HepG2 (cell line): ENCODE measurements at regions of chr13 and their contacts with region 1.

Region 1: GRCh38 chr13:45310341-45311125 is 30.4 kb downstream of the TPT1 start:
- DNase-seq: no peak
- ATAC-seq: peak; percentile 20
- H3K4me3 ChIP-seq: peak overlapping the region in 1 of 3 experiments; percentile 58; a peak in 2 of 6 replicates
- H3K27ac ChIP-seq: no peak overlapping the region
- H3K4me1 ChIP-seq: peaks cover 15% of the 10 kb centered on the region
- H3K27me3 ChIP-seq: no peaks in the 10 kb centered on the region; a peak in 2 of 5 replicates
- CTCF ChIP-seq: no peak
- EP300 ChIP-seq: no peak
- POLR2A ChIP-seq: no peak
- RAD21 ChIP-seq: no peak

Region 2: DNA sequence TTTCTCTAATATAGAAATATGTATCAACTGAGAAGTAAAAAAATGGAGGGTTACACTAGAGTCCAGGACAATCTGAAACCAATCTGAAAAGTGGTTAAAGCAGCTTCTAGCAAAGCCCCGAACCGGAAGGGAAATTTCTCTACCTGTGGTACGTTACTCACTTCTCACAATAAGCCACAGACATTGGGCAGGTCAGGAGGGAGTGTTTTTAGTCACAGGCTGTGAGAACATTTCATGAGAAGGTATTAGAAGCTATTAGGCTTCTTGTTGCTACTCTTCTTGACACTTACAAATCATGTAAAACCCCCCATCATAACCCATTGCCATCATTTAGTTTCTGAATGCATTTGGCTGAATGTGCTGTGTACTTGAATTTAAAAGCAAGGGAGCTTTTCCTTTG is 442.1 kb before region 1 on chr13:
- CTCF ChIA-PET with region 1: no interaction called
- POLR2A ChIA-PET with region 1: no interaction called
- in situ Hi-C with region 1: no loop called
- intact Hi-C with region 1: no loop called
- DNase-seq: no peak
- ATAC-seq: no peak
- H3K4me3 ChIP-seq: no peak overlapping the region
- H3K27ac ChIP-seq: no peak overlapping the region
- H3K4me1 ChIP-seq: 0 out of 2 replicates have a peak, but pooled peaks cover 7% of the 10 kb centered on the region
- H3K27me3 ChIP-seq: no peaks in the 10 kb centered on the region; a peak in 1 of 5 replicates
- CTCF ChIP-seq: no peak
- EP300 ChIP-seq: no peak
- POLR2A ChIP-seq: no peak
- RAD21 ChIP-seq: no peak

Region 3: GRCh38 chr13:44969551-44970484 is 340.7 kb before region 1 on chr13:
- CTCF ChIA-PET with region 1: interaction called, 4 read pairs
- POLR2A ChIA-PET with region 1: no interaction called
- in situ Hi-C with region 1: no loop called
- intact Hi-C with region 1: loop called (anchors 1 kb)
- DNase-seq: peak; percentile 49
- ATAC-seq: peak; percentile 69
- H3K4me3 ChIP-seq: no peak overlapping the region
- H3K27ac ChIP-seq: no peak overlapping the region
- H3K4me1 ChIP-seq: peaks cover 16% of the 10 kb centered on the region
- H3K27me3 ChIP-seq: no peaks in the 10 kb centered on the region
- CTCF ChIP-seq: peak; percentile 72
- EP300 ChIP-seq: no peak
- POLR2A ChIP-seq: no peak
- RAD21 ChIP-seq: 0 out of 2 replicates have a peak, but pooled peaks have one; percentile 26

Region 4: DNA sequence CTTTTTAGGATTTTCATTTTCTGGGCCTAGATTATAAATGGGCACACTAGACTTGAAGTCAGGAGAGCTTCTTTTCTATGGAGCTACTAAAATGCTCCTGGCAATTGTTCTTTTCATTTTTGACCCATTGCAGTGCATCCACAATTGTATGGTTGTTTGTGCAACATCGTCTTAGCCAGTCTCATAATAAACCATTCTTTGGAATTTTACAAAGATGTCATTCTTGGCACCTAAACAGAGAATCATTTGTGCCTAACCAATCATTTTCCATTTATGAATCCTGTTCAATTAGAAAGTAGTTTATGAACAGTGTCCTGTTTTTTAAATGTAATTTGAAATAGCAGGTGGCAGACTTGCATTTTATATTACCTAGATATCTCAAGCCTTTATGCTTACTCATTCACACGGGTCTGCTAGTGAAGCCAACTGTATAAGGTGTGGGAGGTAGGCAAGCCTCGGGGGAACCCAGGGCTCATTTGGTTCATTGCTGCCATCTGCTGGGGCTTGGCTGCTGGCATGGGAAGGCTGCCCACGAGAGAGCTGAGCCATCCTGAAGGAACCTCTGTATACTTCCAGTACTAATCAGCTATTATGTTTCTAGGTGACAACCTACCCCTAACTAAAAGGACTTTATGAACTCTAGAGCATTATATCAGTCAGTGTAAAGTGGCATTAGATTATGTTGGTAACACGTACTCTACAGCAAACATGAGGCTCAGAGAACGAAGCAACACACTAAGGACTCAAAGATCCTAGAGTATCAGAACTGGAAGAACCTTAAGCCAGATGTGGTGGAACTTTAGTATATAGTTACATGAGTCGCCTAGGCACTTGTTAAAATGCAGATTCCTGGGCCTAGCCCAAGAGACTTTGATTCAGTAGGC is 29.5 kb before region 1 on chr13:
- CTCF ChIA-PET with region 1: no interaction called
- POLR2A ChIA-PET with region 1: no interaction called
- in situ Hi-C with region 1: no loop called
- intact Hi-C with region 1: loop called (anchors 1 kb)
- DNase-seq: peak; percentile 47
- ATAC-seq: peak; percentile 99
- H3K4me3 ChIP-seq: no peak overlapping the region
- H3K27ac ChIP-seq: no peak overlapping the region
- H3K4me1 ChIP-seq: no peaks in the 10 kb centered on the region
- H3K27me3 ChIP-seq: no peaks in the 10 kb centered on the region
- CTCF ChIP-seq: peak; percentile 85
- EP300 ChIP-seq: no peak
- POLR2A ChIP-seq: no peak
- RAD21 ChIP-seq: peak; percentile 85